ENCODE measurements at regions of chr1 and their contacts with region 1.

Region 1: DNA sequence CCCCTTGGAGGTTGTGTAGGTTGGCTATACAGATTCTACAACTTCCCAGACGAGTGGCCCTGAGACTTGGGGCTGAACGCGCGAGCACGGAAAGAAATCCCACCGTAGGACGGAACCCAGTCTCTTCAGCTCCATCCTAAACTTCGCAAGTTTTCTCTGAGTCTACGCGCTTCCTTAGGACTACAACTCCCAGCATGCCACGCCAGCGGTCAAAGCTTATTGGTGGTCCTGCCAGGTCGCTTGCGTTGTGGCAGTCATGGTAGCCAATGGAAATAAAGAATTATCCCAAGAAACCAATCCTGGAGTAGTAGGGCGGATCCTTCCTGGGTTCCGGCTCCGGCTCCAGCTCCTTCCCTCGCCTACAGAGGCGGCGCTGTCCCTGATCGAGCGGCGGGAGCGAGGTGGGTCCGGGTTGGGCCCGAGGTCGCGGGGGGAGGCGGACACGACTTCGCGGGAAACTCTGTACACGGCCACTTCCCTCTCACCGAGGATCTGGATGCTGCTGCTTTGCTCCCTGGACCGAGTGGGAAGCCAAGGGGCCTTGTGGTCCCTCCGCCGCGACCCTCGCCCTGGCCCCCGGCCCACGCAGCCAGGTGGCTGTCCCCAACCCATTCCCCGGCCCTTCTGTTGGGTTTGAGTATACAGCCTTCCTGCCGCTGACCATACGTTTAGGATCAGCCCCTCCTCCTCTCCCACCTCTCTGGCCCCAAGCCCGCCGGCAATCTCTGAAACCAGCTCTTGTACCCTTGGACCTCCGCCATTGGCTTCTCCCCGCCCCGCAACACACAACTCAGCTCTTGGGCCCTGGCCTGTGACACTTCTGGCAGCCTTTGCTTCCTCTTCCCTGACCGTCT is at the start of gene ZNF691:
- DNase-seq: peak; percentile 94
- H3K4me3 ChIP-seq: peak within 1 kb of the TSS; percentile 56 to 91 (median 82)
- H3K27ac ChIP-seq: peak within 1 kb of the TSS; percentile 78 to 82 (median 81)
- H3K4me1 ChIP-seq: peaks cover 10 to 19% (median 13%) of the 10 kb centered on the region in 4 donors
- H3K27me3 ChIP-seq: no peaks in the 10 kb centered on the region
- CTCF ChIP-seq: peak; percentile 34 to 50 (median 37)
- EP300 ChIP-seq: no peak
- POLR2A ChIP-seq: peak; percentile 63
- total RNA-seq, gene ZNF691: 1.00 to 11.3 (median 6.0) TPM

Region 2: GRCh38 chr1:42777852-42778251 is 68.6 kb before region 1 on chr1:
- in situ Hi-C with region 1: no loop called
- intact Hi-C with region 1: loop called (anchors 10 kb)
- DNase-seq: no peak
- H3K4me3 ChIP-seq: no peak overlapping the region
- H3K27ac ChIP-seq: no peak overlapping the region
- H3K4me1 ChIP-seq: no peaks in the 10 kb centered on the region
- H3K27me3 ChIP-seq: no peaks in the 10 kb centered on the region
- CTCF ChIP-seq: peak; percentile 46 to 55 (median 51)
- EP300 ChIP-seq: no peak
- POLR2A ChIP-seq: no peak

Region 3: GRCh38 chr1:42816585-42817434 is 29.7 kb before region 1 on chr1 and contains the starts of genes ERMAP and SVBP:
- in situ Hi-C with region 1: no loop called
- intact Hi-C with region 1: no loop called
- DNase-seq: peak; percentile 96
- H3K4me3 ChIP-seq: peak within 1 kb of the TSS; percentile 77 to 92 (median 81)
- H3K27ac ChIP-seq: peak within 1 kb of the TSS; percentile 97 to 99 (median 98)
- H3K4me1 ChIP-seq: peaks cover 4 to 27% (median 15%) of the 10 kb centered on the region in 4 donors
- H3K27me3 ChIP-seq: no peaks in the 10 kb centered on the region
- CTCF ChIP-seq: no peak
- EP300 ChIP-seq: no peak
- POLR2A ChIP-seq: peak; percentile 48
- total RNA-seq, gene ERMAP: 12.5 to 30.7 (median 14.1) TPM
- total RNA-seq, gene SVBP: 15.3 to 33.3 (median 17.6) TPM